KBM-7 (cell line): ENCODE measurements at regions of chr2 and their contacts with region 1.

Region 1: DNA sequence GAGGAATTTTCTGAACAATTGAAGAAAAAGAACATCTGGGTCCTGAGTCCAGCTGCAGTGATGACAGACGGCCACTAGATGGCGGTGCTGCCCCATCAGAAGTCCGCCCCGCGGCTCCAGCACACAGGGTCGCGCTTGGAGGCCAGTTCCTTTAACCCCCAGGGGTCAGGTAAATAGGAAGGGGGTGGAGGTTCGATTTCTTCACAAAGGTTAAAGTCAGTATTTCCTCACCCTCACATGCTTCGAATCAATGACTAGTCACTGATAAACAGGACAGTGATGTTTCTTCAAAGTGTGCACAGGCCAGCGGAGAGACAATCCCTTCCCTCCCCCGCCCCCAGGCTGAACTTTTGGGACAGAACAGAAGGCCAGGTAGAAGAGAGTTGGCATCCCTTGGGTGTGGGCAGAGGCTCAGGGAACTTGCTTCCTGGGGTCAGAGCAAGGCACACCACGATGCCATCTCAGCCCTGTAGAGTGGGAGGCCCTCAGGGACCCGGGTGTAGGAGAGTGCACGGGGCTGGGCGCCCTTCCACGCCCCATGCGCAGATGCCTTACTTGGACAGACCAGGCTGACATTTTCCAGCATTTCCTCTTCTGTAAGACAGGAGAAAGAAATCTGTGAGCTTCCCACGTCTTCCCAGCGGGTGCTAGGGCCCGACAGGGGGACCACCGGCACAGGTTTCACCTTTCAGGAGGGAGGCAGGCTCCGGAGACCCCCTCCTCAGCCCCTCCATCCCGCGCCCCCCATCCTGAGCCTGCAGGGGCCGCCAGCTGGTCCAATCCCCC is 722 bp downstream of the APOB start:
- DNase-seq: peak; percentile 59

Region 2: DNA sequence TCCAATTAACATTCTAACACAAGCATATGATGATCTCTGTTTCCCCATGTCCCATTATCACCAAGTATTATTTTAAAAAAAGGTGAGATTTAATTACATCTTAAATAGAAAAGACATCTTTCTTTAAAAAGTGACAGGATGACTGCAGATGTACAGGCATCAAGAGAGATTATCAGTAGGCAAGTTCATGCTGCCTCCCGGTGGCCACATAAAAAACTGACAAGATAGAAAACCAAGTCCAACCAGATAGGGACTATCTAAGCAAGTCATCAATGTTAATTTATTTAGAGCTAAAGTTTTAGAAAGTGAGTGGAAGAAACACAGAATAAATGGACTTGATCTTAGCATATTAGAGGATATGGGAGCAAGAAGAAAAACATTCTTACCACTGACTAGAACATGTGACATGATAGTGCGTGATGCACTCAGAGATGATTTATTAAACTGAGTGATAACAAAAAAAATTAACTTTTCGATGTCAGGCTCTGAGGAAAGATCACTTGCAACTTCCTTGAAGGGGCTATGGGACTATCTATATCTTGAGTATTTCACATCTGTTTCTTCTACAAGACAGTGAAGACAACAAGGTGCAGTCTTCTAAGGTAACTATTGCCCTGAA is 75.3 kb after region 1 on chr2:
- in situ Hi-C with region 1: loop called (anchors 10 kb)
- DNase-seq: peak; percentile 65